MCF 10A (cell line): ENCODE measurements at regions of chr17 and their contacts with region 1.

Region 1: GRCh38 chr17:74379495-74380085 is 12.3 kb downstream of the GPR142 start:
- DNase-seq: peak; percentile 87
- H3K4me3 Mint-ChIP-seq: peak overlapping the region; percentile 37
- H3K27ac Mint-ChIP-seq: no peak overlapping the region
- H3K4me1 Mint-ChIP-seq: peaks cover 16% of the 10 kb centered on the region
- H3K27me3 Mint-ChIP-seq: peaks cover 39% of the 10 kb centered on the region
- CTCF ChIP-seq: peak; percentile 95

Region 2: GRCh38 chr17:74368092-74369081 is 11.2 kb before region 1 on chr17:
- CTCF ChIA-PET with region 1: interaction called, 69 read pairs
- POLR2A ChIA-PET with region 1: no interaction called
- intact Hi-C with region 1: no loop called
- DNase-seq: peak; percentile 74
- H3K4me3 Mint-ChIP-seq: no peak overlapping the region
- H3K27ac Mint-ChIP-seq: no peak overlapping the region
- H3K4me1 Mint-ChIP-seq: no peaks in the 10 kb centered on the region
- H3K27me3 Mint-ChIP-seq: peaks cover 27% of the 10 kb centered on the region
- CTCF ChIP-seq: peak; percentile 79

Region 3: DNA sequence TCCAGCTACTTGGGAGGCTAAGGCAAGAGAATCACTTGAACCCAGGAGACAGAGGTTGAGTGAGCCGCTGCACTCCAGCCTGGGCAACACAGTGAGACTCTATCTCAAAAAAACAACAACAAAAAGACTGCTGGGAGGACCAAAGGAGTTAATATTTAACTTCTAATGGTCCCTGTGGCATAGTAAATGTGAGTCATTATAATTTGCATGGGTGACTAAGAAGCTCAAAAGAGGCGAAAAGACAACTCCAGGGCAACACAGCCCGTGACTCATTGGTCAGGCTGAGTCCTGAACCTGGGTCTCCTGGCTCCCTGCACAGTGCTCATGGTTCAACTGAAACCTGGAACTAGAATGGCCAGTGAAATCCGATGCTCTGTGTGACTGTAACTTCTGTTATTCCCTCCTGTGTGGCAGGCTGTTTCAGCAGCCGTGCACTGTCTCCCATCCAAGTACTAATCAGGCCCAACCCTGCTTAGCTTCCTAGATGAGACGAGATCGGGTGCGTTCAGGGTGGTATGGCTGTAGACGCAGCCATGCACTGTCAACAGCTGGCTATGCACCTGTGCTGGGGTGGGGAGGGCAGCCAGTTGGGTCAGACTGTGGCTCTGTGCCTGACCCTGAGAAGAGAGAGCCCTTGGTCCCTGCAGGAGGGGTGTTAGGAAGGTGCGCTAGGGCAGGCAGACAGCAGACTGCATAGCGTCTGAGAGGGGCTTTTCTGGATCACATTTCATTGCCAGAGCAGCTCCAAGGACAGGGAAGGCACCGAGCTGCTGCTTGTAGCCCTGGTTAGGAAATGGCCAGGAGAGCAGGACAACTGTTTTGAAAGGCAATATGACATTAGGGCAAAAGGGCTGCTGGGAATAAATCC is 37.8 kb after region 1 on chr17:
- CTCF ChIA-PET with region 1: interaction called, 10 read pairs
- POLR2A ChIA-PET with region 1: interaction called, 3 read pairs
- intact Hi-C with region 1: no loop called
- DNase-seq: peak; percentile 87
- H3K4me3 Mint-ChIP-seq: no peak overlapping the region
- H3K27ac Mint-ChIP-seq: no peak overlapping the region
- H3K4me1 Mint-ChIP-seq: peaks cover 5% of the 10 kb centered on the region
- H3K27me3 Mint-ChIP-seq: no peaks in the 10 kb centered on the region
- CTCF ChIP-seq: no peak

Region 4: DNA sequence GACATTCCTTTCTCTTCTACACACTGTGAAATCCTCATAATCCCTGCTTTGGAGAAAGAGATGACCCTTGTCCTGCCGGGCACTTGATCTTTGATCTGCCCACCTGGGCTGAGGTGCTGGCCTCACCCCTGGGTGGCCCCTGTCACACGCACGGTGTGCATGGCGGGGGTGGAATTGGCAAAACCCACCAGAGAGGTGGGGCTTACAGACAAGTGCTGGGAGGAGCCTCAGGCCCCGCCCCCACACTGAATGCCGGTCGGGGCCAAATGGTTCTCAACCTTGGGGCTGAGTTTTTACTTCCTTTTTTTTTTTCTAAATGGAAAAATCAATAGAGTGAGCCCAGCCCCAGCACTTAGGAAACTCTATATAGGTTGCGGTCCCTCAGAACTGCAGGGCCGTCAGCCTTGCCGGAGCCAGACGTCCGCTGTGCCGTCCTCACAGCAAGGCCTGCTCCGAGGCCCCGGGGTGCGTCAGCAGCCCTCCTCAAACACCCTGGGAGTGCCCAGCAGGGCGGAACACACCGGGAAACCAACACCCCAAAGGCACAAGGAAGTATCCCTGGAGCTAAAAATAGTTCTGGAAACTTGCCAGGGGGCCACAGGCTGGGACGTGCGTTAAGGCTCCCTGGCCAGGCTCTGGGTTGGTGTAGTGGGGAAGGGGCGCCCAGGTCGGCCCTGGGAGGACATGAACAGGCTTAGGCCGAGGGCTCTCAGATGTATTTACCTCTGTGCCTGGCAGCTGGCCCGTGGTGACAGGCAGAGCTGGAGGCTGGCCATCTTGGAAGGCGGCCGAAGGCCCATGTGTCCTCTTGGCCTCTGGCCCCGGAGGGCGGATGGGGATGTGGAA is 63.3 kb after region 1 on chr17:
- CTCF ChIA-PET with region 1: interaction called, 43 read pairs
- POLR2A ChIA-PET with region 1: interaction called, 5 read pairs
- intact Hi-C with region 1: no loop called
- DNase-seq: peak; percentile 91
- H3K4me3 Mint-ChIP-seq: peak overlapping the region; percentile 62
- H3K27ac Mint-ChIP-seq: peak overlapping the region; percentile 78
- H3K4me1 Mint-ChIP-seq: peaks cover 39% of the 10 kb centered on the region
- H3K27me3 Mint-ChIP-seq: no peaks in the 10 kb centered on the region
- CTCF ChIP-seq: no peak

Region 5: DNA sequence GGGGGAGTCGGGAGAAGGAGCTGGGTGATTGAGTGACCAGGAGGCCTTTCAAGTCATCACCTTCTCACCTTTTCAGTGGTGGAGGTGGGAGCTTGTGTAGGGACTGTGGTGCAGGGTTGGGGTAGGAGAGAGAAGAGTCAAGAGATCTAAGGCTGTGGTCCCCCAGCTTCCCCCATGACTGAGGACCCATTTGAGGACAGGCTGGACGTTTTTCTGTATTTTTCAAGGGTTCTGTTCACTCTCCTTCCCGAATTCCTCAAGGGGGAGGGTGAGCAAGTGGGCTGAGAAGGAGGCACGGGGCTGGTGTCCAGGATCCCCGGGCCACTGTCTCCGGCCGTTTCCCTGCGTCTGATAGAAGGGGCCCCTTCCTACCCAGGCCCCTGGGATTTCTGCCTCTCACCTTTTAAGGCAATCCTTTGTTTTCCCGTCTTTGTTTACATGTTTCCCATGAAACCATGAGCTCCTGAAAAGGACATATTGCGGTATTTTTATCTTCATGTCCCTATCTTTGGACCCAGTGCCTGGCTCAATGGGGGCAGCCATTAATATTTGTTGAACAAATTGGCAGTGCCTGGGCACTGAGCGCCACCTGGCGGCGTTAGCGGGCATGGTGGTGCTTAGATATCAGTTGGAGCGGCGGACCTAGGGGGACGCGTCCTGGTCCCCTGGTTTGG is 77.7 kb after region 1 on chr17:
- CTCF ChIA-PET with region 1: interaction called, 283 read pairs
- POLR2A ChIA-PET with region 1: interaction called, 46 read pairs
- intact Hi-C with region 1: loop called (anchors 1 kb)
- DNase-seq: peak; percentile 69
- H3K4me3 Mint-ChIP-seq: no peak overlapping the region
- H3K27ac Mint-ChIP-seq: no peak overlapping the region
- H3K4me1 Mint-ChIP-seq: peaks cover 7% of the 10 kb centered on the region
- H3K27me3 Mint-ChIP-seq: no peaks in the 10 kb centered on the region
- CTCF ChIP-seq: peak; percentile 92

Region 6: DNA sequence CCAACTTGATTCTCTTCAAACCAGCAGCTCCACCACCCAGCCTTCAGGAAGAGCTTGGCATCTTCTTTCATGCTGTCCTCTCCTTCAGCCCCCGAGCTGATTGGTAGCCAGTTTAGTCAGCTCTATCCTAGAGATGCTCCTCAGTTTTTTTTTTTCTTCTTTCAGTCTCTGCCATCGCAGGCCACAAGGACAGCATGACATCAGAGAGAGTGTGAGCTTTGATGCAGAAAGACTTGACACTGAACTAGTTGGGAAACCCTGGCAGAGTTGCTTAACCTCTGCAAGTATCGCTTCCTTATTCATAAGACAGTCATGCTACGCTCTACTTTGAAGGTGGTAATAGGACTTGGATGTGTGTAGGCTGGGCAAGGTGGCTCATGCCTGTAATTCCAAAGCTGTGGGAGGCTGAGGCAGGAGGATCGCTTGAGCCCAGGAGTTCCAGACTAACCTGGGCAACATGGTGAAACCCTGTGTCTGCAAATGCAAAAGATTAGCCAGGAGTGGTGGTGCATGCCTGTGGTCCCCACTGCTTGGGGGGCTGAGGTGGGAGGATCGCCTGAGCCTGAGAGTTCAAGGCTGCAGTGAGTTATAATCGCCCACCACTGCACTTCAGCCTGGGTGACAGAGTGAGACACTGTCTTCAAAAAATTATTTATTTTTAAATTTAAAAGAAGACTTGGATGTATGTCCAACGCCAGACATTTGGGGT is 149.1 kb after region 1 on chr17:
- CTCF ChIA-PET with region 1: interaction called, 16 read pairs
- POLR2A ChIA-PET with region 1: no interaction called
- intact Hi-C with region 1: loop called (anchors 1 kb)
- DNase-seq: peak; percentile 24
- H3K4me3 Mint-ChIP-seq: no peak overlapping the region
- H3K27ac Mint-ChIP-seq: no peak overlapping the region
- H3K4me1 Mint-ChIP-seq: peaks cover 6% of the 10 kb centered on the region
- H3K27me3 Mint-ChIP-seq: peaks cover 67% of the 10 kb centered on the region
- CTCF ChIP-seq: no peak